ENCODE measurements at regions of chr1 and their contacts with region 1.

Region 1: DNA sequence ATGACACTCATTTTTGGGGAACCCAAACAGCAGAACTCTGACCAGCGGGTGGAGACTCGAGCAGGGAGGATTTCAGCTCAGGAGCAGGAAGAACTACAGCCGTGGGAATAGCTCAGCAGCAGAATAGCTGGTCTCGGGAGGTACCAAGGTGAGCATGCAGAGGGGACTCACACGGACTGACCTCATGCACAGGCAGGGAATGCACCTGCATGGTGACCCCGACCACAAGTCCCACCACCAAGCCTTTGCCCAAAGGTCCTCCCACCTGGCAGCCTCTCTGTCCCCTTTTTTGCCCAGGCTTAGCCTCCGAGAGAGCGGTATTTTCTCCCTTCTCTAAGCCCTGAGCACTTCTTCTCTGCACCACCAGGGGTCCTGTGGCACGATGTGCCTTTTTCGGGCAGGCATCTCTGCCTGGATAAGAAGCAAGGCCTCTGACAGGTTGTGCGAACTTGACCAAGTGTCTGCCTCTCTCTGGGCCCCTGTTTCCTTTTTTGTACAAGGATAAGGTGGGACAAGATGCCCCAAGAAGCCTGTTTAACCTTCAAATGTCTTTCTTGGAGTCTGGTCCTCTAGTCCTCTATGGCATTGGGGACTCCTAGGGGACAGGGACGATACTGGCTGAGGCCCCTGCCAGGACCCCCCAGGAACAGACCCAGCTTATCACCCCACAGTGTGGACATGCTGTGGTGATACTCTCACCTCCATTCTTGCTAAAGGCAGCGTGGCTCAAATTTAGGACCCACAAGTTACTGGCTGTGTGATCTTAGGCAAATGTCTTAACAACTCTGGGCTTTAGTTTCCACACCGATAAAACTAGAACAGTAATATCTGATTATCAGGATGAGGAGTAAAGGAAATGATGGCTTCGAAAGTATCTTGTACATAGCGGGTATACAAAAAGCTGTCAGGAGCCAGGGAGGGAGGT is 9.0 kb upstream of the FGR start:
- DNase-seq: peak in 1 of 2 experiments; percentile 33
- H3K4me3 ChIP-seq: no peak overlapping the region
- H3K27ac ChIP-seq: no peak overlapping the region
- H3K4me1 ChIP-seq: no peaks in the 10 kb centered on the region
- H3K27me3 ChIP-seq: no peaks in the 10 kb centered on the region
- CTCF ChIP-seq: peak; percentile 71

Region 2: DNA sequence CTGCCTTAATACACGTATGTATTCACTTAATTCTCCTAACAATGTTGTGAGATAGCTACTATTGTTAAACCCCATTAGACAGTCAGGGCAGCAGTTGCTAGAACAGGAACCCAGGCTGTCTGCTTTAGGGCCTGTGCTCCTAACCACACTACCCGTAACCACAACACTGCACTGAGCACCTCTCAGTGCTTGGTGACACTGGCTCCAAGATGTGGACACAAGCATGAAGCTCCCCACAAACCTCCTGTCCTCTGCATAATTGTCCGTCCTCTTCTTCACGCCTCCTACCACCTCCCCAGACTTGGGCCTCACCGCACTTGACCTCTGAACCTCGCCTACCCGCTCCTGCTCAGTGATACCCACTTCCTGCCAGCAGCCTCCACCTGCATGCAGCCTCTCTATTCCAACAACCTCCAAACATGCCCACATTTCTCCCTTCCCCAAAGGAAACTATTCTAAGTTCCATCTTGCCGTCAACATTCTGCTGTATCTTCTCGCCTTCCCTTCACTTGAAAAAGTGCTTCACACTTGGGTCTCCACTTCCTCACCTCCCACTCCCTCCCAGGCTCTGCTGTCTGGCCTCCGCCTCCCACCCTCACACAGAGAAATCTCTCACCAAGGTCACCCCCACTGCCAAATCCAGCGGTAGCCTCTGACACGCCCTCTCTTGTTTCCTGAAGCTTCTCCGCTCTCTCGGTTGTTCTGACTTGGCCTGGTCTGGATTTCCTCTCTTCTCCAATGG is 25.5 kb before region 1 on chr1:
- CTCF ChIA-PET with region 1: interaction called, 20 read pairs
- POLR2A ChIA-PET with region 1: no interaction called
- intact Hi-C with region 1: no loop called
- DNase-seq: no peak
- H3K4me3 ChIP-seq: no peak overlapping the region
- H3K27ac ChIP-seq: no peak overlapping the region
- H3K4me1 ChIP-seq: no peaks in the 10 kb centered on the region
- H3K27me3 ChIP-seq: no peaks in the 10 kb centered on the region
- CTCF ChIP-seq: no peak